CD8-positive, alpha-beta T cell (primary cell): ENCODE measurements at regions of chr12 and their contacts with region 1.

Region 1: GRCh38 chr12:95820102-95820703 is 29.6 kb upstream of the NTN4 start:
- DNase-seq: peak in 2 of 9 experiments; percentile 16 to 24
- ATAC-seq: no peak
- H3K4me3 ChIP-seq: no peak overlapping the region
- H3K4me3 Mint-ChIP-seq: no peak overlapping the region
- H3K27ac ChIP-seq: no peak overlapping the region
- H3K27ac Mint-ChIP-seq: no peak overlapping the region
- H3K4me1 ChIP-seq: no peaks in the 10 kb centered on the region
- H3K4me1 Mint-ChIP-seq: no peaks in the 10 kb centered on the region
- H3K27me3 ChIP-seq: no peaks in the 10 kb centered on the region
- H3K27me3 Mint-ChIP-seq: peaks cover 17% of the 10 kb centered on the region
- CTCF ChIP-seq: no peak

Region 2: GRCh38 chr12:95623585-95624042 is 196.6 kb before region 1 on chr12:
- CTCF ChIA-PET with region 1: no interaction called
- POLR2A ChIA-PET with region 1: no interaction called
- intact Hi-C with region 1: loop called in 1 of 2 experiments (anchors 10 kb)
- DNase-seq: peak in 3 of 9 experiments; percentile 6 to 46 (median 36)
- ATAC-seq: no peak
- H3K4me3 ChIP-seq: no peak overlapping the region
- H3K4me3 Mint-ChIP-seq: no peak overlapping the region
- H3K27ac ChIP-seq: no peak overlapping the region
- H3K27ac Mint-ChIP-seq: no peak overlapping the region
- H3K4me1 ChIP-seq: no peaks in the 10 kb centered on the region
- H3K4me1 Mint-ChIP-seq: no peaks in the 10 kb centered on the region
- H3K27me3 ChIP-seq: no peaks in the 10 kb centered on the region
- H3K27me3 Mint-ChIP-seq: no peaks in the 10 kb centered on the region
- CTCF ChIP-seq: no peak